Spleen (tissue), 13 donors: ENCODE measurements at regions of chr5 and their contacts with region 1.

Region 1: DNA sequence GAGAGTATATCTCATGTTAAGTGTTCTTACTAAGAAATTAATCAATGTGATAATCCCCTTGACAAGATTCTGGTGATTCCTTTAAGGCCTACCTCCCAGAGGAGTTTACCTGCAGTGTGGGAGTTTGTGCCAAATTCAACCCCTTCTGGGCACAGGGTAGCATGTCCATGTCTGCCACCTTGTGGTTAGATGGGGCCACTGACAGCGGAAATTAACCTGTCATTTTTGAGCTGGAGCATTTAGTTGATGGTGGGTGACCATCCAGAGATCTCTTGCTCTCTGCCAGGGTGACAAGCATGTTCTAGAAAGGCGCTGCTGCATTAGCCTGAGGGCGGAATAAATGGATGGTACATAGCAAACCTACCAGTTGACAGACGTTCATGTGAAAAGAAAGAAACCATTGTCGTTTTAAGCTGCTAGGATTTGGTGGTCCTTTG is 132.2 kb downstream of the FBXO4 start:
- DNase-seq: peak; percentile 56
- H3K4me3 ChIP-seq: no peak overlapping the region
- H3K27ac ChIP-seq: no peak overlapping the region
- H3K4me1 ChIP-seq: no peaks in the 10 kb centered on the region
- H3K27me3 ChIP-seq: no peaks in the 10 kb centered on the region
- CTCF ChIP-seq: peak; percentile 45 to 75 (median 68)
- POLR2A ChIP-seq: no peak

Region 2: DNA sequence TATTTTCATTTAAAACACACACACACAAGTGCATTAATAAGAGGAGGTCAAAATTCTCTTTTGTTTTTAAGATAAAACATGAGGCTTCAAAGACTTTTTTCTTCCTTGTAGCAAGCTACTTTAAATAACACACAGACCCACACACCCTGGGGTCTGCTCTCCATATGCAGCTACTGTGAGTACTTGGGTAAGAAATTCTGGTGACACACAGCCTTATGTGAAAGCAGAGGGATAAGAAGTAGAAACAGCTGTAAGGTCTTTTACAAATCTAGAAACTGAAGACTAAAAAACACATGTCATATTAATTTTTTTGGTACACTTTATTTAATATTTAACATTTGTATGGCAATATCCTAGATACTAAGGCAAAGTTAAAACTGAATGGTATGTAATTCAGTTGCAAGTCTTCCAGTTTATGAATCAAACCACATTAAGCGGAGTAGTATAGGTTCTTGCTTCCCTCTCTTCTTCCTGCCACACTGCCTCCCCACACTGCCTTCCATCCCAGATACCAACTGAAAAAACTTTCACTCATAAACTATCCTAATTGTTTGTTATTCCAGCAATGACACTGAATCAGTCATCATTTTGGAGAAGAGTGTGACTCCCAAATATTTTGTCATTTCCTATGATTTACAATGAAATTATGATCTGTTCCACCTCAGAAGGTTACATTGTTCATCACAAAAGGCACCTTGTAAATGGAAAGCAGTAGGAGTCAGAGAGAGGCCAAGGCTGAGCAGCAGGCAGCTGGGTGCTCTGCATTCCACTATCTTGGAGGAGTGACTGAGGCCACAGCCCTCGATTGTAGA is 638.8 kb before region 1 on chr5:
- intact Hi-C with region 1: no loop called
- DNase-seq: no peak
- H3K4me3 ChIP-seq: no peak overlapping the region
- H3K27ac ChIP-seq: no peak overlapping the region
- H3K4me1 ChIP-seq: no peaks in the 10 kb centered on the region
- H3K27me3 ChIP-seq: no peaks in the 10 kb centered on the region
- CTCF ChIP-seq: no peak
- POLR2A ChIP-seq: no peak

Region 3: DNA sequence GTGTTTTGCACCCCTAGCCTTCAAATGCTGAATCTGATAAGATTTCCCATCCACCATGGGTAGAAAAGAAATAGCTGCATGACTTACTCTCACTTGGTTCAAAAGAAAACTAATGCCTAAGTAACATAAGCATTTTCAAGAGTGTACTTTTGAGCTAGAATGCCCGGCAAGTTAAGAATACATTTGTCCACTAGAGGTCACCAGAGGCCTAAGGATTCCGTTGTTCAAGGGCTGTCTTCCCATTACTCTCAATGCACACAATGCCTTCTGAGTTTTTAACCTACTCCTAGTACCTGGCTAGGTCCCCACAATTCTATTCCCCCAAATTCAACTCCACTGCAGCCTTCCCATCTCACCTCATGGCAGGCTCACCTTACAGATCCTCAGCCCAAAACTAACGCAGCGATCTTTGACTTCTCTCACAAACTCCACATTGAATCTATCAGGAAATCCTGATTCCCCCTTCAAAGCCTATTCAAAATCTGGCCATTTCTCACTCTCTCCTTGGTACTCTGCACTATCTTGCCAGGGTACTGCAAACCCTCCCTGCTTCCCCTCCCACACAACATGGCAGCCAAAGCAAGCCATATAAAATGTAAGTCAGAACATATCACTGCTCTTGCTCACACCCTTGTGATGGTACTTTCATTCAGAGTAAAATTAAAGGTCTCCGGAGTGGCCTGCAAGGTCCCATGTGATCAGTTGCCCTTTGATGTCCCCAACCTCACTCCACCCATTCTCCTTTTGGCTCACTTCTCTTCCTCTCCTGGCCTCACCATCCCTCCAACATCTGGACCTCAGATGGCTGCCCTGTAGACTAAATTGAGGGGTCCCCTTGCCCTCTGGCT is 200.4 kb before region 1 on chr5:
- intact Hi-C with region 1: loop called (anchors 5 kb)
- DNase-seq: no peak
- H3K4me3 ChIP-seq: no peak overlapping the region
- H3K27ac ChIP-seq: no peak overlapping the region
- H3K4me1 ChIP-seq: peaks cover 0 to 6% (median 0%) of the 10 kb centered on the region in 6 donors
- H3K27me3 ChIP-seq: no peaks in the 10 kb centered on the region
- CTCF ChIP-seq: peak; percentile 56 to 89 (median 80)
- POLR2A ChIP-seq: no peak